MCF 10A (cell line): ENCODE measurements at regions of chr5 and their contacts with region 1.

Region 1: GRCh38 chr5:18281682-18282557 is 647.7 kb downstream of the TAF11L14 start:
- DNase-seq: peak; percentile 57
- H3K4me3 Mint-ChIP-seq: no peak overlapping the region
- H3K27ac Mint-ChIP-seq: no peak overlapping the region
- H3K4me1 Mint-ChIP-seq: no peaks in the 10 kb centered on the region
- H3K27me3 Mint-ChIP-seq: no peaks in the 10 kb centered on the region
- CTCF ChIP-seq: peak; percentile 47

Region 2: DNA sequence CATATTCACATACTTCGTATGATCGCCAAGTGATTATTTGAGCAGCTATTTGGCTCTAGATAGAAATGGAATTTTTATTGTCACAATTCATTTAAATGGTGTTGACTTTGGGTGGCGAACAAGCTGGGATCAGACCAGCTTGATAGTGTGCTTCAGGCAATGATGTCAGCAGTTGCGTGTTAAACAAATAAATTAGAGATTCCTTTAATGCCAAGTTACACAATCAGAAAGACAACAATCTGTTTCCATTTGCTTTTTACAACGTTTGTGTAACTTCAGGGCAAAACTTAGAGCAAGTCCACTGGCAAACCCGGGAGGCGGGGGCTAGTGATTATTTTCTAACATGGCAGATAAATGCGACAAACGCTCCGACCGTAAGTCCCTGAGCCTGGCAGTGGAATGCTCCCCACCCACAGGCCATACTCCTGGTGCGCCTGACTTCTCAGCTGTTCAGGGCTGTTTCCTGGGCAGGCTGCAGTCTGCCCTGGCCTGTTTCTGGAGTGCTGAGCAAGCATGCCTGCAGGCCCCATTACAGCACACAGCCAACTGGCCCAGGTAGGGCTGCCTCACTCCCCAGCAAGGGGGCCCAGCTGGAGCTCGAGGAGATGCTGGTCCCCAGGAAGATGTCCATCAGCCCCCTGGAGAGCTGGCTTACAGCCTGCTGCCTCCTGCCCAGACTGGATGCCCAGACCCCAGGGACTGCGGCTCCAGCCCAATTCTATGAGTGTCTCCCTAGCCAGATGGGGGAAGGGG is 975.8 kb before region 1 on chr5:
- CTCF ChIA-PET with region 1: interaction called, 3 read pairs
- POLR2A ChIA-PET with region 1: no interaction called
- intact Hi-C with region 1: loop called (anchors 10 kb)
- DNase-seq: peak; percentile 89
- H3K4me3 Mint-ChIP-seq: peak overlapping the region; percentile 33
- H3K27ac Mint-ChIP-seq: peak overlapping the region; percentile 83
- H3K4me1 Mint-ChIP-seq: peaks cover 29% of the 10 kb centered on the region
- H3K27me3 Mint-ChIP-seq: no peaks in the 10 kb centered on the region
- CTCF ChIP-seq: no peak

Region 3: DNA sequence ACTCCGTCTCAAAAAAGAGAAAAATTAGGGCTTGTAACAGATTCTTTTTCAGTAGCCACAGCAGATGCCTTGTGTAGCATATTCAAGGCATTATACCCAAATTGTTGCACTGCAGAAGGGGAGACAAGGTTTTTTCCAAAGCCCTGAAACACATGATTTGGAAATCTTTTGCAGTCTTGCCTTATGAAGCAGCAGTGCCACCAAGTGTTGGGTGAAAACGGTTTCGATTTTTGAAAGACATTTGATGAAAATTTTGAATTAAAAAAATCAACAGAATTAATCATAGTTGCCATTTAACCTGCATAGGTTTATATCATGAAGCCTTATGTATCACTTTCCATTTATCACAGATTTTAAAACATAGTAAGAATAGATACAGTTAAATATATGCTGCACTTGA is 168.2 kb before region 1 on chr5:
- CTCF ChIA-PET with region 1: interaction called, 7 read pairs
- POLR2A ChIA-PET with region 1: no interaction called
- intact Hi-C with region 1: loop called (anchors 1 kb)
- DNase-seq: peak; percentile 41
- H3K4me3 Mint-ChIP-seq: peak overlapping the region; percentile 49
- H3K27ac Mint-ChIP-seq: peak overlapping the region; percentile 37
- H3K4me1 Mint-ChIP-seq: peaks cover 8% of the 10 kb centered on the region
- H3K27me3 Mint-ChIP-seq: no peaks in the 10 kb centered on the region
- CTCF ChIP-seq: peak; percentile 48

Region 4: GRCh38 chr5:18270683-18271338 is 11.1 kb before region 1 on chr5:
- CTCF ChIA-PET with region 1: interaction called, 22 read pairs
- POLR2A ChIA-PET with region 1: no interaction called
- intact Hi-C with region 1: no loop called
- DNase-seq: peak; percentile 66
- H3K4me3 Mint-ChIP-seq: no peak overlapping the region
- H3K27ac Mint-ChIP-seq: no peak overlapping the region
- H3K4me1 Mint-ChIP-seq: peaks cover 13% of the 10 kb centered on the region
- H3K27me3 Mint-ChIP-seq: no peaks in the 10 kb centered on the region
- CTCF ChIP-seq: no peak

Region 5: DNA sequence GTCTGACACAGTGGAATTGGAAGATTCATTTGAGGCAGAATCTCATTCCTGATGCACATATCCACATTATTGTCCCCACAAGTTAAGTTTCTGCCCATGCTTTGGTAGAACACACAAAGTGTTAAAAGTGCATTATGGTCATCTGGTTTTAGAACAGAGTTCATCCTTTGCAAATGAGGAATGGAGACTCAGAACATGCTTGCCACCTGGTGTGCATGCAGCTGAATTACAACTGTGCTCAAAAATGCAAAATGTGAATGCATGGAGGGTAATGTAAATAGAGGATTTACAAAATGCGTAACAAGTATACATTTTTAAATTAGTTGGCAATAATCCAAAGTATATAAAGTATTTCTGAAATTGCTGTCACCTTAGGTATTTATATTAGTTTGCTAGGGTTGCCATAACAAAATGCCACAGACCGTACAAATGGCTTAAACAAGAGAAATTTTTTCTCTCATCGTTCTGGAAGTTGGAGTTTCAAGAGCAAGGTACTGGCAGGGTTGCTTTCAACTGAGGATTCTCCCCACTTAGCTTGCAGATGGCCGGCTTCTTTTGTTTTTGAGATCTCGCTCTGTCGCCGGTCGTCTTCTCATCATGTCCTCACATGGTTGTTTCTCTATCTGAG is 23.5 kb after region 1 on chr5:
- CTCF ChIA-PET with region 1: interaction called, 35 read pairs
- POLR2A ChIA-PET with region 1: interaction called, 3 read pairs
- intact Hi-C with region 1: no loop called
- DNase-seq: peak; percentile 51
- H3K4me3 Mint-ChIP-seq: no peak overlapping the region
- H3K27ac Mint-ChIP-seq: no peak overlapping the region
- H3K4me1 Mint-ChIP-seq: peaks cover 7% of the 10 kb centered on the region
- H3K27me3 Mint-ChIP-seq: no peaks in the 10 kb centered on the region
- CTCF ChIP-seq: peak; percentile 80

Region 6: DNA sequence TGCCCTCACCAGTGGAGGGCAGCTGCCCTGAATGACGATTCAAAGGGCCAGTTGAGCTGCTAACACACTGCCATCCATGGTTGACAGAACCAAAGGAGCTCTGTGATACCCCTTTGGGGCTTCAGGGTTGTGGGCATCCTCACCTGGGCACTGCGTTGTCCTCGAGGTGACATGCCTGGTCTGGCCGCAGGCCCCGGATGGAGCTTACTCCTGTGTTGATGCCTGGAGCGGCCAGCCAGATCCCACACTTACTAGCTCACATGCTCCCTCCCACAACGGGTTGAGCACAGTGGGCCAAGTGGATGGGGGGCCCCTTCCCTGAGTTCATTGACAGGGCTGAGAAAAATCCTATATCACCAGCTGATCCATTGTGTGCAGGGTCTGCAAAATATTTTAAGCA is 251.2 kb after region 1 on chr5:
- CTCF ChIA-PET with region 1: no interaction called
- POLR2A ChIA-PET with region 1: no interaction called
- intact Hi-C with region 1: no loop called
- DNase-seq: no peak
- H3K4me3 Mint-ChIP-seq: no peak overlapping the region
- H3K27ac Mint-ChIP-seq: no peak overlapping the region
- H3K4me1 Mint-ChIP-seq: no peaks in the 10 kb centered on the region
- H3K27me3 Mint-ChIP-seq: no peaks in the 10 kb centered on the region
- CTCF ChIP-seq: no peak